Right cardiac atrium (tissue), 5 donors: ENCODE measurements at regions of chr9 and their contacts with region 1.

Region 1: DNA sequence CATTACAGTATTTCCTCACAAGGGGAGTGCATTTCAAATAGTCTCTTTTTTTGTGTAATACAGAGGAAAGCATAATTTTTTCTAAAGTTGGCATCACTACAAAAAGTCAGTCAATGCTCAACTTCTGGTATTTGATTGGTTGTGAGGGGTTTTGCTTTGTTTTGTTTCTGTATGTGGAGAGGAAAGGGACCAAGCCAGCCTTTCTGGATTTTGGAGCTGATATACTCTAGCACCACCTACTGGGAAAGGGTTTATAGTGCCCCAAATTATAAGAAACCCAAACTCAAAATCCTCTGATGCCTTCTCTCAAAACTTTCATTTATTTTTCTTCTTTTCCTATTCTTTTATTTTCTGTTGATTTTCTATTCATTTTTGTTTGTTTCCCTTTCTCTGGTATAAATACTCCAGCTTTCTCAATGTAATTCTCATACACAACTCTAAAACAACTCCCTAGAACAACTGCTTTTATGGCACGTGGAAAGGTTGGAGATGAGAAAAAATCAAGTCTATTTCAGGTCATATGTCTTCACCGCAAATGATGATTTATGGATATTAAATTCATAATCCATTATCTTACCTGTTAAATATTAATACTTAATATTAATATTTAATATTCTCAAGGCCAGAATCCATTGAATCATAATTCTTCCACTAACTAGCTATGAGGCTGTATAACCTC is 69.5 kb upstream of the ANXA1 start:
- DNase-seq: no peak
- ATAC-seq: peak in 1 of 2 donors; percentile 57
- H3K4me3 ChIP-seq: no peak overlapping the region
- H3K27ac ChIP-seq: no peak overlapping the region
- H3K4me1 ChIP-seq: no peaks in the 10 kb centered on the region
- H3K27me3 ChIP-seq: no peaks in the 10 kb centered on the region

Region 2: GRCh38 chr9:72807765-72808445 is 274.2 kb before region 1 on chr9:
- intact Hi-C with region 1: no loop called
- DNase-seq: no peak
- ATAC-seq: no peak
- H3K4me3 ChIP-seq: no peak overlapping the region
- H3K27ac ChIP-seq: no peak overlapping the region
- H3K4me1 ChIP-seq: no peaks in the 10 kb centered on the region
- H3K27me3 ChIP-seq: no peaks in the 10 kb centered on the region

Region 3: GRCh38 chr9:72856972-72857623 is 225.0 kb before region 1 on chr9:
- intact Hi-C with region 1: loop called (anchors 5 kb)
- DNase-seq: no peak
- ATAC-seq: peak; percentile 67 to 78
- H3K4me3 ChIP-seq: no peak overlapping the region
- H3K27ac ChIP-seq: no peak overlapping the region
- H3K4me1 ChIP-seq: peaks cover 7% of the 10 kb centered on the region
- H3K27me3 ChIP-seq: no peaks in the 10 kb centered on the region

Region 4: DNA sequence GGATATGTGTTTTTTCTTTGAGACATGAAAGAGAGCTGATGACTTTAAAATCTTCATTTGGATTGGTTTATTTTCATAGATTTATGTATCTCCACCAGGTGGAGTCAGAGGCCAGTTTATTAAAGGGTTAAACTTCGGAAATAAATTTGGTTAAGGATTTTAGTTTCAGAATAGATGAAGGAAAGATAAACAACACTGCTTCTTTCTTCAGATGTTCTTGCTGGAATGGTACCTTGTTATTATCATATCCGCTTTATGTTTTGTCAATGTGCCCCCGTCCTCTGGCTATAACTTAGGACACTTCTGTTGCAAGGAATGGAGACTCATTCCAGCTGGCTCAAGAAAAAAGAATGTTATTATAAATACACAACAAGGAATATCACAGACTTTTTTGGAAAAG is 210.4 kb before region 1 on chr9:
- intact Hi-C with region 1: no loop called
- DNase-seq: no peak
- ATAC-seq: no peak
- H3K4me3 ChIP-seq: no peak overlapping the region
- H3K27ac ChIP-seq: no peak overlapping the region
- H3K4me1 ChIP-seq: peaks cover 3% of the 10 kb centered on the region
- H3K27me3 ChIP-seq: no peaks in the 10 kb centered on the region